Heart right ventricle (tissue), 16 donors: ENCODE measurements at regions of chr16 and their contacts with region 1.

Region 1: GRCh38 chr16:82639666-82640336 is 13.0 kb downstream of the CDH13 start:
- DNase-seq: peak; percentile 55 to 65
- ATAC-seq: peak; percentile 41 to 77 (median 62)
- H3K4me3 ChIP-seq: no peak overlapping the region
- H3K27ac ChIP-seq: peak overlapping the region in 3 of 10 donors; percentile 58 to 76 (median 71)
- H3K4me1 ChIP-seq: peaks cover 4 to 73% (median 33%) of the 10 kb centered on the region in 9 donors
- H3K27me3 ChIP-seq: no peaks in the 10 kb centered on the region
- CTCF ChIP-seq: peak; percentile 57 to 82 (median 69)

Region 2: DNA sequence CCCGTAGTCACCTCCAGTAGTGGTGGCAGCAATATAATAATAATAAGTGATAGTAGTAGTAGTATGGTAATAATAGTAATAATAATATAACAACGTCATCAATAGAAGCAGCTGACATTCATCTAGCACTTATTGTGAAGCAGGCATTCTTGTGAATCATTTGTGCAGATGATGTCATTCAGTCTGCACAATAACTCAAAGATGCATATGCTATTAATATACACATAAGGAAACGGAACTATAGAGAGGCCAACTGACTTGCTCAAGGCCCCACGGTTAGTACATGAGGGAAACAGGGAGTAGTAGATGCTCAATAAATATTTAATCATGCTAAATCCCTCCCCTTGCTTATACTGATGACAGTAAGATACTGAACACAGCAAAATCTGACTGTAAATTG is 1360.4 kb before region 1 on chr16:
- intact Hi-C with region 1: loop called in 1 of 10 experiments (anchors 5 kb)
- DNase-seq: no peak
- ATAC-seq: no peak
- H3K4me3 ChIP-seq: no peak overlapping the region
- H3K27ac ChIP-seq: no peak overlapping the region
- H3K4me1 ChIP-seq: no peaks in the 10 kb centered on the region
- H3K27me3 ChIP-seq: no peaks in the 10 kb centered on the region
- CTCF ChIP-seq: no peak

Region 3: DNA sequence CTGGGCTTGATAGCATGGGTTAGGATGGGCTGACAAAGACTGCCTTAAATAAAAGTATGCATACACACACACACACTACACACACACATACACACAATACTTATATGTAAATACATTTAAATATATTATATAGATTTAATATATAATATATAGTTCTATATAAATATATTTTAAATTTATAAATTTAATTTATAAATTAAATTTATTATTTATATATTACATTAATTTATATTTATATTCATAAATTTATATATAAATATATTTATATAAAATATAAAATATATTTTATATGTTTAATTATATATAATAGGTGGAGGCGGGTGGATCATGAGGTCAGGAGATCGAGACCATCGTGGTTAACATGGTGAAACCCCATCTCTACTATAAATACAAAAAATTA is 70.2 kb after region 1 on chr16:
- intact Hi-C with region 1: loop called in 1 of 10 experiments (anchors 5 kb)
- DNase-seq: no peak
- ATAC-seq: no peak
- H3K4me3 ChIP-seq: no peak overlapping the region
- H3K27ac ChIP-seq: no peak overlapping the region
- H3K4me1 ChIP-seq: peaks cover 3 to 33% (median 20%) of the 10 kb centered on the region in 9 donors
- H3K27me3 ChIP-seq: no peaks in the 10 kb centered on the region
- CTCF ChIP-seq: no peak

Region 4: DNA sequence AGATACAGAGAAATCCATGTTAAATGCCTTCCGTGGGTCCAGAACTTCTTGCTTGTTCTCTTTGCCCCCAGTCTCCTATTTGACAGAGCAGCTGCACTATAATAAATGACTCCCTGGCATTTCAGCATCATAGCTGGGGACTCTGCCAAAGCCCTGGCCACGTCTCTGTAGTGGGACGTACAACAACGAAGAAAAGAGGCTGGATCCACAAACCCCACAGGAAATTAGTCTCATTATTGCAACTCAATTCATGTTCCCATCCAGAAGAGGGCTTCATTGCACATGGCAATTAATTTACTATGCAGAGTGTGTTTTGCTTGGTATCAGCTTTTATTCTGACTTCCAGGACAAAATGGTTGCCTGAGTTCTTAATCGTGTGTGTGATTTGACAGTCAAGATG is 108.2 kb after region 1 on chr16:
- intact Hi-C with region 1: loop called in 1 of 10 experiments (anchors 10 kb)
- DNase-seq: peak; percentile 28 to 57
- ATAC-seq: peak in 7 of 8 donors; percentile 52 to 79 (median 75)
- H3K4me3 ChIP-seq: no peak overlapping the region
- H3K27ac ChIP-seq: peak overlapping the region in 6 of 10 donors; percentile 15 to 61 (median 42)
- H3K4me1 ChIP-seq: peaks cover 0 to 53% (median 18%) of the 10 kb centered on the region in 9 donors
- H3K27me3 ChIP-seq: no peaks in the 10 kb centered on the region
- CTCF ChIP-seq: peak in 8 of 9 donors; percentile 13 to 56 (median 32)

Region 5: DNA sequence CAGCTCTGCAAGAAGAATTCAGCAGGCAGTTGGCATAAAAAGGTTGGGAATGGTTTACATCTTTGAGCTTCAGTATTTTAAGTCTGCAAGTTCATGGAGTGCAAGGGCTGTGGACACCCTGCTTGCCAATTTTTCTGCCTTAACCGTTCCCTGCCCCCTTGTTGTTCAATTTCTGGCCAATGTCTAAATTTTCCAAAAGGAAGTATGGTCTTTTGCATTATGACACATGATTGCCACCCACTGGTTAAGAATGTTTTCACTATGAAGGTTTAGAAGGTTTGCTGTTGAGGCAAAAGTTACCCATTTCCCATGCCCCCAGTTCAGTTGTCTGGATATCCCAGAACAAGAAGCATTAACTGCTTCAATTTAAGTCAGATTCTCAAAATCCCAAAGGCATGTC is 428.9 kb after region 1 on chr16:
- intact Hi-C with region 1: loop called in 4 of 10 experiments (anchors 10 kb)
- DNase-seq: peak in 1 of 2 donors; percentile 4
- ATAC-seq: peak in 1 of 8 donors; percentile 25
- H3K4me3 ChIP-seq: no peak overlapping the region
- H3K27ac ChIP-seq: no peak overlapping the region
- H3K4me1 ChIP-seq: peaks cover 0 to 9% (median 1%) of the 10 kb centered on the region in 9 donors
- H3K27me3 ChIP-seq: no peaks in the 10 kb centered on the region
- CTCF ChIP-seq: peak in 7 of 9 donors; percentile 15 to 59 (median 36)